ENCODE measurements at regions of chr2 and their contacts with region 1.

Region 1: DNA sequence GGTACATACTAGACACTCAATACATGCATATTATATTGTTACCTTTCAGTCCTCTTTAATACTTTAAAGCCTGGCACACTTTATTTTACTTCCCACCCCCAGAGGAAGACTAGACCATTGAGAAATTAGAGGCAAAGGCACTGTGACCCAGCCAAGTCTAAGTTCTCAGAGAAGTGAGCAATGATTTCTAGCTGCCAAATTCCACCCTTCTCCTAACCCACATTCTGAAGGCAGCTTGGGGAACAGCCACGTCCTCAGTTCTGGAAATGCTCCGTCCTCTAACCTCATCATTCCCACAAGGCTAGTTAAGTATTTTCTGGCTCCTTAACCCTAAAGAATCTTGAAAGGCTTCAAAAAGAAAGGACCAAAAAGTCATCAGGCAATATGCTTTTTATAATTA is 86.6 kb downstream of the COL5A2 start:
- DNase-seq: no peak
- ATAC-seq: no peak
- H3K4me3 Mint-ChIP-seq: no peak overlapping the region
- H3K27ac Mint-ChIP-seq: peak overlapping the region; percentile 2
- H3K4me1 Mint-ChIP-seq: peaks cover 5% of the 10 kb centered on the region
- H3K27me3 Mint-ChIP-seq: no peaks in the 10 kb centered on the region

Region 2: GRCh38 chr2:189287982-189288521 is 195.1 kb after region 1 on chr2:
- CTCF ChIA-PET with region 1: interaction called, 12 read pairs
- POLR2A ChIA-PET with region 1: no interaction called
- DNase-seq: no peak
- ATAC-seq: peak; percentile 70
- H3K4me3 Mint-ChIP-seq: no peak overlapping the region
- H3K27ac Mint-ChIP-seq: no peak overlapping the region
- H3K4me1 Mint-ChIP-seq: peaks cover 15% of the 10 kb centered on the region
- H3K27me3 Mint-ChIP-seq: no peaks in the 10 kb centered on the region

Region 3: DNA sequence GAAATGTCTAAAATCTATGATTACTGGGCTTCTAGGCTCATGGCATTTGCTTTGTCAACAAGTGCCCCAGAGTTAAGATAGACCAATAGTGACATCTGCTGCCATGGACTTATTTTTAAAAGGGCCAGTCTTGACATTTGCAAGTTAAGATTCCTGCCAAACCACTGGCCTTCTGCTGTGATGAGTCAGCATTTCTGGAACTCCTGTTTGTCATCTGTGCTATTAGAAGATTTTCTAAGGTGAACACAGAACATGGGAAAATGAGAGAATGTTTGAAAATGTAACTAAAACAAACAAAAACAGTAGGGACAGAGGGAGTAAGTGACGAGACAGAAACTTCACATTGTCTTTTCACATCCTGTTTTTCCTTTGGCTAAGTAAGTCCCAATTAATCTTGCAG is 254.6 kb after region 1 on chr2:
- CTCF ChIA-PET with region 1: interaction called, 13 read pairs
- POLR2A ChIA-PET with region 1: no interaction called
- DNase-seq: peak; percentile 52
- ATAC-seq: peak; percentile 79
- H3K4me3 Mint-ChIP-seq: peak overlapping the region; percentile 25
- H3K27ac Mint-ChIP-seq: peak overlapping the region; percentile 61
- H3K4me1 Mint-ChIP-seq: peaks cover 20% of the 10 kb centered on the region
- H3K27me3 Mint-ChIP-seq: no peaks in the 10 kb centered on the region

Region 4: DNA sequence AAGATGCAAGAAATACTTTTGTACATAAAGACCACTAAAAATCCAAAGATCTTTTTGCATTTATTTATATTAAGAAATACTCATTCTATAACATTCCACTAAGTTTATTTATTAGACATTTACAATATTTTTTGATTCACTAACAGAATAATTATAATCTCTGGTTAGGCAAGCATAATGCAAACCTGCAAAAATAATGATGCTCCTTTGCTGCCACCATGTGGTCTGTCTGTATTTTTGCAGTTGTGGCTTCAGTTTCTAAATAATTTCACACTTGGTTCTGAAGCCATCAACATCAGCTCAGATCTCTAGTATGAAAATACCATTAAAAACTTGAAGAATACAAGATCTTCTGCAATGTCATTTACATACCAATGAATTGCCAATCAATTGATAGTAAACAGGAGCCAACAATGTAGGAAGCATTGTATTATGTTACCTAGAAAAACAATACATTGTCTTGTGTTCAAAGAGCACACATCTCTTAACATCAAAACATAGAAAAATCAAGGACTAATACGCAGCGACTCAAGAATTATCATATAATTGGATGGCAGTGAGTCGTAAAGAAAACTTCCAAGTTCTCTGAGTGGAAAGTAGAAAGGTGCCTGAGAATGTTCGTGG is 319.5 kb after region 1 on chr2:
- CTCF ChIA-PET with region 1: interaction called, 27 read pairs
- POLR2A ChIA-PET with region 1: no interaction called
- DNase-seq: peak; percentile 66
- ATAC-seq: no peak
- H3K4me3 Mint-ChIP-seq: no peak overlapping the region
- H3K27ac Mint-ChIP-seq: no peak overlapping the region
- H3K4me1 Mint-ChIP-seq: peaks cover 9% of the 10 kb centered on the region
- H3K27me3 Mint-ChIP-seq: no peaks in the 10 kb centered on the region